Gastrocnemius medialis (tissue), 4 donors: ENCODE measurements at regions of chr5 and their contacts with region 1.

Region 1: DNA sequence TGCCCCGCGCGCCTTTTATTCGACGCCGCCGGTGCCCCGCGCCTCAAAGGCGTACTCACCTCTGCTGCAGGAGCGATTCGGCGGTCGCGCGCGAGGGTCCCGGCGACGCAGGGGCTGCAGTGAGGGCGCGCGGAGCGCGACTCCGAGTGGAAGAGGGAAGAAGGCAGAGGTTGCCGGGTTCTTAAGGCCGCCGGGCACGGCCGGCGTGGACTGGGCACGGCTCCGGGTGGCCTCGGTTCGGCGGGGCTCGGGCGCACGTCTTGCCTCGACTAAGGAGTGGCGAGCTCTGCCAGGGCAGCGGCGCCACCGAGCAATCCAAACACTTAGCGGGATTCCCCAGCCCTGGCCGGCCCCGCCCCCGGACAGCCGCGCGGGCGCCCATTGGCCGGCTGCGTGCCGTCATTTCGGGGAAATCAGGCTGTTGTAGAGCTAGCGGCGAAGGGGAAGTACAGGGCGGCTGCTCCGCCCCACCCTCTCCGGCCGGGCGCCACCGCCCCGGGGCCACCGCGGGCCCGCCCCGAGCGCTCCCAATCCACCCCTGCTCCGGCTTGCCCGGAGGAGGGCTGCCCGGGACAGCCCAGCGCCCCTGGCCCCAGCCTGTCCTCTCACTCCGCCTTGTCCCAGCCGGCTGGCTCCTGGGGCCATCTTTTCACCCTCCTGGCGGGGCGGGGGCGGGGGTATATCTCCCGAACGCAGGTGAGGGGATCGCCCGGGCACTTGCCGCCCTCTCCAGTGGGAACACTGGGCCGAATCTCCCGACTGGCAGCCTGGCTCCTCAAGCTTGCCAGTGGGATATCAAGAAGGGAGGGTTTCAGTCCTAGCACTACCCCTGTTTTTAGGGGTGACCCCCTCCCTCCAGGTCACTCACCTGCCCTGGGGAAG is at the start of gene IRF1:
- DNase-seq: peak; percentile 93 to 96
- ATAC-seq: peak; percentile 90 to 92
- H3K4me3 ChIP-seq: peak within 1 kb of the TSS; percentile 70 to 90 (median 84)
- H3K27ac ChIP-seq: peak within 1 kb of the TSS; percentile 86 to 95 (median 90)
- H3K4me1 ChIP-seq: peaks cover 36 to 40% of the 10 kb centered on the region in 2 donors
- H3K27me3 ChIP-seq: no peaks in the 10 kb centered on the region
- CTCF ChIP-seq: no peak
- POLR2A ChIP-seq: peak; percentile 96 to 97
- total RNA-seq, gene IRF1: 5.5 to 20.6 (median 8.4) TPM

Region 2: GRCh38 chr5:132369474-132370180 is 121.1 kb before region 1 on chr5 and contains the start of gene SLC22A5:
- in situ Hi-C with region 1: no loop called
- intact Hi-C with region 1: loop called (anchors 5 kb)
- DNase-seq: peak; percentile 61 to 80
- ATAC-seq: peak; percentile 73 to 75
- H3K4me3 ChIP-seq: peak within 1 kb of the TSS; percentile 64 to 82 (median 78)
- H3K27ac ChIP-seq: peak within 1 kb of the TSS; percentile 92 to 99 (median 96)
- H3K4me1 ChIP-seq: peaks cover 33 to 36% of the 10 kb centered on the region in 2 donors
- H3K27me3 ChIP-seq: no peaks in the 10 kb centered on the region
- CTCF ChIP-seq: peak in 1 of 5 experiments; percentile 18
- POLR2A ChIP-seq: peak; percentile 93 to 95
- total RNA-seq, gene SLC22A5: 56.2 to 116 (median 79.2) TPM